Activated naive CD4-positive, alpha-beta T cell treated with anti-CD3 and anti-CD28 coated beads for 36 hours (primary cell): ENCODE measurements at regions of chr7 and their contacts with region 1.

Region 1: GRCh38 chr7:143380255-143380645 is 895 bp upstream of the ZYX start:
- DNase-seq: peak; percentile 93
- H3K4me3 Mint-ChIP-seq: peak overlapping the region; percentile 82
- H3K27ac Mint-ChIP-seq: peak overlapping the region; percentile 92
- H3K4me1 Mint-ChIP-seq: peaks cover 35% of the 10 kb centered on the region
- H3K27me3 Mint-ChIP-seq: no peaks in the 10 kb centered on the region

Region 2: DNA sequence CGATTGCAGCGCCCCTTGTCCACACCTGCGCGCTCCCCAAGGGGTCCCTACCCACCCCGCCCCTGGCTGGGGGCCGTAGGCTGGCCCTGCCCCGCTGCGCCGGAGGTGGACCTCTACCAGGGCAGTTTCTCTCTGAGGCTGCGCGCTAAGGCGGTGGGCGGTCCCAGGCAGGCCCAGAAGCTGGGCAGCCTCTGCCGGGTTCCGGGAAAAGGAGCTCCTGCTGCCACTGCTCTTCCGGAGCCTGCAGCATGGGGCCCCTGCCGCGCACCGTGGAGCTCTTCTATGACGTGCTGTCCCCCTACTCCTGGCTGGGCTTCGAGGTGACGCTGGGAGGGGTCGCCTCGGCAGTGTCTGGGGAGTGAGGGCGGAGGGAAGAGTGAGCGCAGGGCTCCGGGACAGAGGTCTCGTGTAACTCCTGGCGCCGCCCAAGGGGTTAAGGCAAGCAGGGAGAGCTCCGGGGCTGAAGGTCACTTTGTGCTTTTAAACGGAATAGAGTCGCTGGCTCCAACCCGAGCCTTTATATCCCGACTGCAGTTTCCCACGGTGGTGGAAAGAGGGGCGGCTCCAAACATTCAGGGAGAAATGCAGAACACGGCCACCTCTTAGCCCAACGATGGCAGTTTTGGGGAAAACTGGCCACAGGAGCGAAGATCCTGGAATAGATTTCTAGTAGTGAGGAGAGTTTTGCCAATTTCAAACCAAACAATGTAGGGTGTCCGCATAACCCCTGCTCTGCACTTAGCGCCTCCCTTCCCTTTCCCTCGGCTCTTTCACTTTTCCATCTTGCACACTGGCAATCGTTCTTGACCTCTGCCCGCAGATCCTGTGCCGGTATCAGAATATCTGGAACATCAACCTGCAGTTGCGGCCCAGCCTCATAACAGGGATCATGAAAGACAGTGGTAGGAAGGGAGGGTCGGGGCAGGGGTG is 116.7 kb before region 1 on chr7 and contains the start of gene GSTK1:
- CTCF ChIA-PET with region 1: interaction called, 7 read pairs
- intact Hi-C with region 1: loop called (anchors 1 kb)
- DNase-seq: peak; percentile 90
- H3K4me3 Mint-ChIP-seq: peak within 1 kb of the TSS; percentile 96
- H3K27ac Mint-ChIP-seq: peak within 1 kb of the TSS; percentile 96
- H3K4me1 Mint-ChIP-seq: peaks cover 55% of the 10 kb centered on the region
- H3K27me3 Mint-ChIP-seq: no peaks in the 10 kb centered on the region
- total RNA-seq, gene GSTK1: 186 to 187 TPM

Region 3: DNA sequence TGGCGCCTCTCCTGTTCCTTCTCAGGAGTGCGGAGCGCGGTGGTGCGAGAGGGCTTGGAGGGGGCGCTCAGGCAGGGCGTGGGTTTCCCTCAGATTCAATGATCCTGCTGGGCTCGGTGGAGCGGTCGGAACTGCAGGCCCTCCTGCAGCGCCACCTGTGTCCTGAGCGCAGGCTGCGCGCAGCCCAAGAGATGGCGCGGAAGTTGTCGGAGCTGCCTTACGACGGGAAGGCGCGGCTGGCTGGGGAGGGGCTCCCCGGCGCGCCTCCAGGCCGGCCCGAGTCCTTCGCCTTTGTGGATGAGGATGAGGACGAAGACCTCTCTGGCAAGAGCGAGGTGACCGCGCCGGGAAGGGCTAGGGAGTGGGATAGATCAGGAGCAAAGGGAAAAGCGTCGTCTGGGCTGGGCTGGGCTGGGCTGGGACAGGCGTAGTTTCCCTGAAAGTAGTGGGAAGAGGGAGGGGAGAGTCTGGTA is 34.8 kb before region 1 on chr7:
- CTCF ChIA-PET with region 1: interaction called, 3 read pairs
- intact Hi-C with region 1: loop called (anchors 1 kb)
- DNase-seq: peak; percentile 78
- H3K4me3 Mint-ChIP-seq: peak overlapping the region; percentile 72
- H3K27ac Mint-ChIP-seq: no peak overlapping the region
- H3K4me1 Mint-ChIP-seq: peaks cover 8% of the 10 kb centered on the region
- H3K27me3 Mint-ChIP-seq: peaks cover 2% of the 10 kb centered on the region

Region 4: DNA sequence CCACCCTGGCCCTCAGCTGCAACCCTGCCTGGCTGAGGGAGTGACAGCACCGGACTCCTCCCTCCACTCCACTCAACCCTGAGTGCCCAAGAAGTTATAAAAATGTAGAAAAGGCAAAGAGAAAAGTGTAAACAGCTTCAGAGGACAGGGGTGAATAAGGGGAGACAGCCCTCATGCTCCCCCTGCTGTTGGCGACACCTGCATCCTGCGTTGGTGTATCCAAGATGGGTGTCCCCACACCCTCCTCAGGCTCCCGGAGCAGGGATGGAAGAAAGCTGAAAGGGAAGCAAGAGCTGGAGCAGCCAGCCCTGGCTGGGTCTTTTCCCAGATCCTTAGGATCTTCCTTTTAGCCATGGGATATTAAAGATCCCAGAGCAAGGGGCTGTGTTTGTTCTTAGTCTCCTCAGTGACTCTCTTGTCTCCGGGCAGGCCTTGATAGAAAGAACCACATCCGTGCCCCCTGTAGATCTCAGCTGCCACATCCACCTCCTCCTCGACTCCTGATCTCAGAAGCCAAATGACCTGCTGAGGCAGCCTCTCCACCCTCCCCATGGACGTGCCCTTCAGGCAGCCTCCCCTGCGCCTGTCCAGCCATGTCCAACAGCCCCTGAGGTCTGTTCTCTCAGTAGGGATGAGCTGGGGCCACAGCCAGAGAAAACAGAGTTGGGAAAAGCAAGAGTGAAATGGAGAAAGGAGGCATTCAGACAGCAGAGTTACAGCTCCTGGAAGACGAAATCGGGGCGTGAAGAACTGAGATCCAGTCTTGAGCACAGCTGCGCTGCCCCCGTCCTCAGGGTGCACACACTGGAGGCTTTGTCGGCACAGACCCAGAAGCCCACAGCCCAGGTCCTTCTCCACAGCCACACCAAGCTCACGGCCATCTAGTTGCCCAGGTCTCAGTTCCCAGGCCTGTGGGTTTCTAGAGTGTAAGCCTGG is 24.5 kb before region 1 on chr7:
- CTCF ChIA-PET with region 1: no interaction called
- intact Hi-C with region 1: no loop called
- DNase-seq: no peak
- H3K4me3 Mint-ChIP-seq: no peak overlapping the region
- H3K27ac Mint-ChIP-seq: no peak overlapping the region
- H3K4me1 Mint-ChIP-seq: no peaks in the 10 kb centered on the region
- H3K27me3 Mint-ChIP-seq: peaks cover 2% of the 10 kb centered on the region

Region 5: GRCh38 chr7:143416565-143417149 is 36.4 kb after region 1 on chr7:
- CTCF ChIA-PET with region 1: interaction called, 25 read pairs
- intact Hi-C with region 1: loop called (anchors 1 kb)
- DNase-seq: no peak
- H3K4me3 Mint-ChIP-seq: no peak overlapping the region
- H3K27ac Mint-ChIP-seq: no peak overlapping the region
- H3K4me1 Mint-ChIP-seq: peaks cover 22% of the 10 kb centered on the region
- H3K27me3 Mint-ChIP-seq: no peaks in the 10 kb centered on the region

Region 6: GRCh38 chr7:143504937-143505297 is 124.7 kb after region 1 on chr7:
- CTCF ChIA-PET with region 1: no interaction called
- intact Hi-C with region 1: loop called (anchors 5 kb)
- DNase-seq: no peak
- H3K4me3 Mint-ChIP-seq: no peak overlapping the region
- H3K27ac Mint-ChIP-seq: no peak overlapping the region
- H3K4me1 Mint-ChIP-seq: peaks cover 19% of the 10 kb centered on the region
- H3K27me3 Mint-ChIP-seq: no peaks in the 10 kb centered on the region